ENCODE measurements at regions of chr19 and their contacts with region 1.

Region 1: GRCh38 chr19:49224856-49225255 is 67.3 kb downstream of the TRPM4 start:
- DNase-seq: peak; percentile 56 to 78
- H3K4me3 ChIP-seq: no peak overlapping the region
- H3K27ac ChIP-seq: no peak overlapping the region
- H3K4me1 ChIP-seq: no peaks in the 10 kb centered on the region; a peak in 1 of 7 replicates
- H3K27me3 ChIP-seq: no peaks in the 10 kb centered on the region
- CTCF ChIP-seq: peak; percentile 71 to 76 (median 73)
- EP300 ChIP-seq: no peak
- POLR2A ChIP-seq: no peak
- RAD21 ChIP-seq: peak; percentile 82 to 88

Region 2: GRCh38 chr19:49118565-49119410 is 106.1 kb before region 1 on chr19 and contains the start of gene C19orf73:
- CTCF ChIA-PET with region 1: interaction called, 12 read pairs
- POLR2A ChIA-PET with region 1: no interaction called
- DNase-seq: peak in 1 of 2 experiments; percentile 94
- H3K4me3 ChIP-seq: peak within 1 kb of the TSS; percentile 64 to 86 (median 78)
- H3K27ac ChIP-seq: peak within 1 kb of the TSS; percentile 57; the same call in 1 of the 2 replicates
- H3K4me1 ChIP-seq: peaks cover 0 to 5% (median 4%) of the 10 kb centered on the region in 4 experiments; a peak in 4 of 7 replicates
- H3K27me3 ChIP-seq: peaks cover 8 to 19% (median 17%) of the 10 kb centered on the region in 4 experiments
- CTCF ChIP-seq: peak in 1 of 3 experiments; percentile 5; a peak in 1 of 4 replicates
- EP300 ChIP-seq: peak in 1 of 2 experiments; percentile 76; a peak in 1 of 3 replicates
- POLR2A ChIP-seq: peak in 1 of 2 experiments; percentile 24; a peak in 1 of 3 replicates
- RAD21 ChIP-seq: no peak; a peak in 1 of 4 replicates
- total RNA-seq, gene C19orf73: 1.2 and 2.5 TPM in 2 replicates

Region 3: DNA sequence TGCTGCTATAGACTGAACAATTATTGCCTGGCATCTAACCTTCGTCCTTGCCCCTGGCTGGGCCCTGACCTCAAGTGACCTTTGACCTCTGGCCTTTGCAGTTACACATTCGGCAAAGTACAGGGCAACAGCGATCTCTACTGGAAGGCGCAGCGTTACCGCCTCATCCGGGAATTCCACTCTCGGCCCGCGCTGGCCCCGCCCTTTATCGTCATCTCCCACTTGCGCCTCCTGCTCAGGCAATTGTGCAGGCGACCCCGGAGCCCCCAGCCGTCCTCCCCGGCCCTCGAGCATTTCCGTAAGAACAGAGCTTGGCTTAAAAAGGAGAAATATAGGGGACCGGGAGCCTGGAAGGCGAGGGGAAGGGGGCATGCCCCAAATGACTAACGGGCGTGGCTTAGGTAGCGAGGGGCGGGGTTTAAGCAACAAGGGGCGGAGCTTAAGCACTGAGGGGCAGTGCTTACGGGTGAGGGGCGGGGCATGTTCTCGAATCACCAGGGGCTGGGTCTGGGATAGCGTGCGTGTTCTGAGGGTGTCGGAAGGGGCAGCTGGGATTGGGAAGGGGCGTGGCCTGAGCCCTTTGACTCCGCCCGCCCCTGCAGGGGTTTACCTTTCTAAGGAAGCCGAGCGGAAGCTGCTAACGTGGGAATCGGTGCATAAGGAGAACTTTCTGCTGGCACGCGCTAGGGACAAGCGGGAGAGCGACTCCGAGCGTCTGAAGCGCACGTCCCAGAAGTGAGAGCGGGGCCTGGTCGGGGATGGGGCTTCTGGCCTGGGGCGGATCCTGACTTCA is 14.6 kb before region 1 on chr19:
- CTCF ChIA-PET with region 1: interaction called, 56 read pairs
- POLR2A ChIA-PET with region 1: interaction called, 4 read pairs
- DNase-seq: peak; percentile 91 to 97
- H3K4me3 ChIP-seq: peak overlapping the region; percentile 32 to 61 (median 44)
- H3K27ac ChIP-seq: peak overlapping the region; percentile 40; the same call in 1 of the 2 replicates
- H3K4me1 ChIP-seq: peaks cover 0 to 7% (median 3%) of the 10 kb centered on the region in 4 experiments; a peak in 5 of 7 replicates
- H3K27me3 ChIP-seq: no peaks in the 10 kb centered on the region
- CTCF ChIP-seq: peak; percentile 73 to 75 (median 75)
- EP300 ChIP-seq: no peak
- POLR2A ChIP-seq: no peak
- RAD21 ChIP-seq: peak; percentile 78 to 81

Region 4: GRCh38 chr19:49255674-49256073 is 30.8 kb after region 1 on chr19:
- CTCF ChIA-PET with region 1: interaction called, 11 read pairs
- POLR2A ChIA-PET with region 1: no interaction called
- DNase-seq: no peak
- H3K4me3 ChIP-seq: no peak overlapping the region
- H3K27ac ChIP-seq: no peak overlapping the region
- H3K4me1 ChIP-seq: no peaks in the 10 kb centered on the region
- H3K27me3 ChIP-seq: no peaks in the 10 kb centered on the region
- CTCF ChIP-seq: no peak
- EP300 ChIP-seq: no peak
- POLR2A ChIP-seq: no peak
- RAD21 ChIP-seq: no peak

Region 5: GRCh38 chr19:49327878-49328544 is 103.2 kb after region 1 on chr19:
- CTCF ChIA-PET with region 1: interaction called, 11 read pairs
- POLR2A ChIA-PET with region 1: no interaction called
- DNase-seq: no peak
- H3K4me3 ChIP-seq: no peak overlapping the region
- H3K27ac ChIP-seq: no peak overlapping the region
- H3K4me1 ChIP-seq: no peaks in the 10 kb centered on the region
- H3K27me3 ChIP-seq: no peaks in the 10 kb centered on the region; a peak in 1 of 7 replicates
- CTCF ChIP-seq: peak in 2 of 3 experiments; percentile 63 to 69; a peak in 3 of 4 replicates
- EP300 ChIP-seq: no peak
- POLR2A ChIP-seq: no peak
- RAD21 ChIP-seq: peak; percentile 41 to 54

Region 6: GRCh38 chr19:49374665-49375434 is 150.0 kb after region 1 on chr19:
- CTCF ChIA-PET with region 1: no interaction called
- POLR2A ChIA-PET with region 1: no interaction called
- DNase-seq: no peak
- H3K4me3 ChIP-seq: no peak overlapping the region
- H3K27ac ChIP-seq: no peak overlapping the region
- H3K4me1 ChIP-seq: no peaks in the 10 kb centered on the region
- H3K27me3 ChIP-seq: no peaks in the 10 kb centered on the region; a peak in 1 of 7 replicates
- CTCF ChIP-seq: no peak
- EP300 ChIP-seq: no peak
- POLR2A ChIP-seq: no peak
- RAD21 ChIP-seq: no peak

Measured in H1 (cell line).